ENCODE measurements at regions of chr9 and their contacts with region 1.

Region 1: DNA sequence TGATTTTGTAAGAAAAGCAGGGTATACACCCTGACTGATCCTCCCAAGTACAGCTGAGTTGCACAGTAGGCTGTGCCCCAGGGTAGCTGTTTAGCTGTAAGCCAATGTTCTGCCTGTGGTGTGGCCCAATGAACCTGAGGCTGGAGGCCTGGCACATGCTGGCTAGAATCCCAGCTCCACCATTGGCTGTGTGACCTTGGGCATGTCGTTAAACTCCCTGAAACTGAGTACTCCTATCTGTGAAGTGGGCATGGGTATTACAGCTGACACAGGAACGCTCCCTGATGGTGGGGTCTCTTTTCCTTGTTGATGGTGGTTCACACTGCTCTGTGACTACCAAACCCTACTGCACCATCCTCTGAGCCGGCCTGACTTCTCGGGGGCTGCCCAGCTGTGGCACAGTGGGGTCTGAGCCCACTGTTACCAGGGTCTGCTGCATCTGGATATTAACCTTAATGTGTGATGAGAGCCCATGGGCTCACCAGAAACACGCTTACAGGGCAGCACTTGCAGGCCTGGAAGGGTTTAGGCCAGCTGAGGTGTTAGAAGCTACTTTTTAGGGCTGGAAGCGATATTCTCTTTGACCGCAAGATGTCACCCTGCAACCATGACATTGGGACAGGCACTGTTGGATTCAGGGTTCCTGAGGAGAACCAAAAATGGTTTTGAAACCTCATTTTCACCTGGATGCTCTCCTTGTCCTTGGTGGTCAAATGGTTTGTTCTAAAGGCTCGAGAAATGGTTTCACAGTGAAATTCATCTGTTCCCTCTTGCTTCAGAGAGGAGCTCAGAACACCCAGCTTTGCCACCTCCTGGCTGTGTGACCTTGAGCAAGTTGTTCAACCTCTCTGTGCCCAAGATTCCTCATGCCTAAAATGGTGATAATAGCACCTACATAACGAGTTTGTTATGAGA is 6.8 kb upstream of the GADD45G start:
- DNase-seq: peak in 1 of 3 donors; percentile 29
- ATAC-seq: peak; percentile 40 to 66
- H3K4me3 ChIP-seq: no peak overlapping the region
- H3K27ac ChIP-seq: no peak overlapping the region
- H3K4me1 ChIP-seq: no peaks in the 10 kb centered on the region
- H3K27me3 ChIP-seq: no peaks in the 10 kb centered on the region

Region 2: DNA sequence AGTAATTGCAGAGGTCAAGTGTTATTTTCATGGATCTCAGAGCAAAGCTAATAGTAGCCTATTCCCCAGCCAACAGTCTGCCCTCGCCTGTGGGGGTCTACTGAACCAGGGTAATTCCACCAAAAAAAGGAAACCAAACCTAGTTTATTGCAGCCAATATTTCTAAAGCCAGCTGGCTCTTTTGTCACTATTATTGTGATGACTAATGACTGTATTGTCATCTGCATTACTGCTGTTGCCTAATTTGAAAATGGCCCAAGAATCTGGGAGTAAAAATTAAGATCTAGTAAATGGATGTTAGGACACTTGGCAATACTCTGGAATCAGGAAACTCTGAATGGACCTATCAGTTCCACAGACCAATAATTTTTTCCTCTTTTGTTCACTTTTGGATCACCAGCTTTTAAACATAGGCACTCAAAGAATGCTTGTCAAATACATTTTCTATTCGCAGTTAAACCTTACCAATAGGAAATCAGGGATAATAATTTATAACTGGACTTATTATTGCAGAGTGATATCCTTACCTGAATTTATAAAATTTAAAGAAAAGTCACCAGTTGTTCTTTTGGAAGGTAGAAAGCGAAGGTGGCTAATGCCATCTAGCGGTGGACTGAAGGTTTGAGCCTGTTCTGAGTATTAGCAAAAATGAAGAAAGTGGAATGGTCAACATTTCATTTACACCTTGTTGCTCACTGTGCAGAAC is 1272.8 kb after region 1 on chr9:
- intact Hi-C with region 1: loop called in 3 of 4 experiments (anchors 10 kb)
- DNase-seq: no peak
- ATAC-seq: no peak
- H3K4me3 ChIP-seq: no peak overlapping the region
- H3K27ac ChIP-seq: no peak overlapping the region
- H3K4me1 ChIP-seq: no peaks in the 10 kb centered on the region
- H3K27me3 ChIP-seq: no peaks in the 10 kb centered on the region

Region 3: GRCh38 chr9:90894986-90895687 is 1297.2 kb after region 1 on chr9:
- intact Hi-C with region 1: loop called in 1 of 4 experiments (anchors 10 kb)
- DNase-seq: no peak
- ATAC-seq: no peak
- H3K4me3 ChIP-seq: no peak overlapping the region
- H3K27ac ChIP-seq: no peak overlapping the region
- H3K4me1 ChIP-seq: no peaks in the 10 kb centered on the region
- H3K27me3 ChIP-seq: no peaks in the 10 kb centered on the region